Lower leg skin (tissue), 4 donors: ENCODE measurements at regions of chr4 and their contacts with region 1.

Region 1: DNA sequence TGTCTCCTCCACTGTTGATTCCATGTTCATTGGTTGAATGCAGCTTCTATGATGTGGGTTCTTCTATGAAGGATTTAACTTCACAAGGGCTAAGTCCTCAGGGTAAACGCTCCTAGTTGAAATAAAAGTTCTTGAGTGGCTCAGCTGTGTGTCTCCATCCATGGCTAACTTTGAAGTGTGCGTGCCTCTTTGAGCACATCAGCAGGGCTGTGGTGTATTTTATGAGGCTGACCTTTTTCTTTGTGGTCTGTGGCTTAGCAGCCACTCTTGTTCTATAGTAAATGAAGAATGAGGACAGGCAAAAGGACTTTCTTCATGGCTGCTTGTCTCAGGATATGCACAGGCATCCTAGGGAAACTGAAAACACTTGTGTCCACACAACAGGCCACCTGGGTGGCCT is 88.5 kb downstream of the KIT start:
- DNase-seq: no peak
- H3K4me3 ChIP-seq: no peak overlapping the region
- CTCF ChIP-seq: no peak
- POLR2A ChIP-seq: no peak

Region 2: GRCh38 chr4:53551958-53552357 is 1194.3 kb before region 1 on chr4:
- intact Hi-C with region 1: loop called (anchors 5 kb)
- DNase-seq: peak in 1 of 2 donors; percentile 36
- H3K4me3 ChIP-seq: no peak overlapping the region
- CTCF ChIP-seq: no peak
- POLR2A ChIP-seq: no peak

Region 3: DNA sequence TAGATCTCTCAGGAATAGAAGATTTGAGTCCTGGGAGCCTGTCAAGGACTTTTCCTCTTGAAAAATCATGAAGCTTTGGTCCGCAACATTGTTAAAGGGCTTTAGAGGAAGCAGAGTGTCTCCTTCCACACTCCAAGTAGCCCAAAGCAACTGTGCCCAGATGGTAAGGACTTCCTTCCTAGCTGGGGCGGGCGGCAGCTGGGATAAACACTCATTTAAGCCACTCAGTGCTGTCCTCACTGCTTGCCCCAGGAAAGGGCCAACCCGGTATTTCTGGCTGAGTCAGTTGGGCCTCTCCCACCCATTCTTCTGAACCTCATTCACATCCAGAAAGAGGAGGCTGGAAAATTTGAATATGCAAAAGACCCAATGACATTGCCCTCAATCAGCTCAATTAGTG is 826.1 kb before region 1 on chr4:
- intact Hi-C with region 1: no loop called
- DNase-seq: no peak
- H3K4me3 ChIP-seq: no peak overlapping the region
- CTCF ChIP-seq: no peak
- POLR2A ChIP-seq: no peak

Region 4: DNA sequence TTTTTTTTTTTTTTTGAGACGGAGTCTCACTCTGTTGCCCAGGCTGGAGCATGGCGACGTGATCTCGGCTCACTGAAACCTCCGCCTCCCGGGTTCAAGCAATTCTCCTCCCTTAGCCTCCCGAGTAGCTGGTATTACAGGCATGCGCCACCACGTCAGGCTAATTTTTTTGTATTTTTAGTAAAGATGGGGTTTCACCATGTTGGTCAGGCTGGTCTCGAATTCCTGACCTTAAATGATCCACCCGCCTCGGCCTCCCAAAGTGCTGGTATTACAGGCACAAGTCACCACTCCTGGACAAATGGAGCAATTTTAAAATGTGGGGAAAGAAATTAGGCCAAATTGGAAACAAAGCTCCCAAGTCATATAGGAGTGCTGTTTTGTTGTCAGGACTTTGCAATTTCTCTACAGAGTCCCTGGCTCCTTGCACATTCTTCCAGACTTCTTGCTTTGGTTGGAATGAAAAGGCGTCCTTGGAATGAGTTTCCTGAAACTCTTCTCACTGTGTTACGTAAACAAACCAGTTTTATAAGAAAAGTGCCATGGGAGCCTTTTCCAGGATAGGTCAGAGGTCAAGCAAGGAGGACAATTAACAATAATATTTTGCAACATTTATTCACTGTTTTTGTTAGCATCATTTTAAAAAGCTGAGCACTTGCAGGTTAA is 121.0 kb before region 1 on chr4:
- intact Hi-C with region 1: no loop called
- DNase-seq: no peak
- H3K4me3 ChIP-seq: no peak overlapping the region
- CTCF ChIP-seq: no peak
- POLR2A ChIP-seq: no peak

Region 5: GRCh38 chr4:54837576-54838140 is 91.4 kb after region 1 on chr4:
- intact Hi-C with region 1: no loop called
- DNase-seq: no peak
- H3K4me3 ChIP-seq: no peak overlapping the region
- CTCF ChIP-seq: no peak
- POLR2A ChIP-seq: no peak